ENCODE measurements at regions of chr2 and their contacts with region 1.

Region 1: GRCh38 chr2:23169896-23170295 is 215.1 kb upstream of the KLHL29 start:
- DNase-seq: no peak
- ATAC-seq: no peak
- H3K4me3 Mint-ChIP-seq: no peak overlapping the region
- H3K27ac Mint-ChIP-seq: no peak overlapping the region
- H3K4me1 Mint-ChIP-seq: no peaks in the 10 kb centered on the region
- H3K27me3 Mint-ChIP-seq: peaks cover 3% of the 10 kb centered on the region
- CTCF ChIP-seq: no peak

Region 2: GRCh38 chr2:22076454-22076853 is 1093.4 kb before region 1 on chr2:
- CTCF ChIA-PET with region 1: no interaction called
- POLR2A ChIA-PET with region 1: no interaction called
- intact Hi-C with region 1: no loop called
- DNase-seq: no peak
- ATAC-seq: no peak
- H3K4me3 Mint-ChIP-seq: no peak overlapping the region
- H3K27ac Mint-ChIP-seq: no peak overlapping the region
- H3K4me1 Mint-ChIP-seq: no peaks in the 10 kb centered on the region
- H3K27me3 Mint-ChIP-seq: no peaks in the 10 kb centered on the region
- CTCF ChIP-seq: no peak

Region 3: GRCh38 chr2:23183733-23184132 is 13.8 kb after region 1 on chr2:
- CTCF ChIA-PET with region 1: no interaction called
- POLR2A ChIA-PET with region 1: no interaction called
- intact Hi-C with region 1: loop called (anchors 1 kb)
- DNase-seq: no peak
- ATAC-seq: no peak
- H3K4me3 Mint-ChIP-seq: no peak overlapping the region
- H3K27ac Mint-ChIP-seq: no peak overlapping the region
- H3K4me1 Mint-ChIP-seq: no peaks in the 10 kb centered on the region
- H3K27me3 Mint-ChIP-seq: no peaks in the 10 kb centered on the region
- CTCF ChIP-seq: no peak